Heart right ventricle (tissue), 16 donors: ENCODE measurements at regions of chr9 and their contacts with region 1.

Region 1: GRCh38 chr9:10282084-10282483 is 330.7 kb downstream of the PTPRD start:
- DNase-seq: no peak
- ATAC-seq: no peak
- H3K4me3 ChIP-seq: no peak overlapping the region
- H3K27ac ChIP-seq: no peak overlapping the region
- H3K4me1 ChIP-seq: no peaks in the 10 kb centered on the region
- H3K27me3 ChIP-seq: no peaks in the 10 kb centered on the region
- CTCF ChIP-seq: no peak

Region 2: DNA sequence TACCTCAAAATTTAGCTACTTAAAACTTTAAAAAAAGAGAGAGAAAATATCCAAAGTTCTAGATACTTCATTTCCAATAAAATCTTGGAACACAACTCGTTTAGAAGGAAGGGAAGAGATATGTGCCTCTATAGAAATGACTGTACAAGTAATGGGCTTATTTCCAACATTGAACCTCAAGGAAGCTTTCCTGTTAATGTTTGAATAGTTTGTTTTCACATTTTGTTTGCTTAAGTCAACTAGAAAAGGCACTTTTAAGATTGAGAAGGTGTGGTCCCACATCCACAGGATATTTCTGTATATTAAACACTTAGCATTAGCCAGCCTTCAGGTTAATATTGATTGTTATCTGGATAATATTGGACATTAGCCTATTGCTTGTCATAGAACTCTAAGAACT is 54.0 kb before region 1 on chr9:
- intact Hi-C with region 1: loop called in 1 of 10 experiments (anchors 10 kb)
- DNase-seq: no peak
- ATAC-seq: no peak
- H3K4me3 ChIP-seq: no peak overlapping the region
- H3K27ac ChIP-seq: no peak overlapping the region
- H3K4me1 ChIP-seq: no peaks in the 10 kb centered on the region
- H3K27me3 ChIP-seq: no peaks in the 10 kb centered on the region
- CTCF ChIP-seq: no peak